Mammary epithelial cell (primary cell): ENCODE measurements at regions of chr16 and their contacts with region 1.

Region 1: GRCh38 chr16:49755313-49755620 is 100.6 kb downstream of the ZNF423 start:
- DNase-seq: no peak
- H3K4me3 ChIP-seq: no peak overlapping the region
- H3K27ac ChIP-seq: no peak overlapping the region
- H3K4me1 ChIP-seq: no peaks in the 10 kb centered on the region
- H3K27me3 ChIP-seq: peaks cover 3% of the 10 kb centered on the region
- CTCF ChIP-seq: no peak

Region 2: GRCh38 chr16:49649013-49649785 is 106.1 kb before region 1 on chr16:
- CTCF ChIA-PET with region 1: no interaction called
- dilution Hi-C with region 1: loop called (anchors 5 kb)
- in situ Hi-C with region 1: no loop called
- intact Hi-C with region 1: no loop called
- DNase-seq: no peak
- H3K4me3 ChIP-seq: no peak overlapping the region
- H3K27ac ChIP-seq: no peak overlapping the region
- H3K4me1 ChIP-seq: no peaks in the 10 kb centered on the region
- H3K27me3 ChIP-seq: no peaks in the 10 kb centered on the region
- CTCF ChIP-seq: no peak

Region 3: DNA sequence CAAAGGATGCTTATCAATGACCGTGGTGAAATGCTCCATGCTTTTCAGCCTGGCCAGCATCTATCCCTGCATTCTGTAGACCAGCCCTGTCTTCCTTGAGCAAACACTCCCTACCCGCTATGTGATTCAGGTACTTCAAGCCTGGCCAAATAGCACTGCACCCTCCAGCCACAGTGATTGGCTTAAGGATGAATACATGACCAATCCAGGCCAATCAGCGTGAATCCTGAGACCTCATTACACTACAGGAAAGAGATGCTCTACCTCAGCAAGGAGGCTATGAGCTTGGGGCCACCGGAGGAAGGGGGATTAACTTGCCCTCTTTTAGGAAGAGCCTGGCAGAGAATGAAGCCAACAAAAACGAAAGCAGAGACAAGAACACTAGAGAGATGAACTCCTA is 61.8 kb before region 1 on chr16:
- CTCF ChIA-PET with region 1: no interaction called
- dilution Hi-C with region 1: loop called (anchors 5 kb)
- in situ Hi-C with region 1: no loop called
- intact Hi-C with region 1: no loop called
- DNase-seq: no peak
- H3K4me3 ChIP-seq: no peak overlapping the region
- H3K27ac ChIP-seq: no peak overlapping the region
- H3K4me1 ChIP-seq: no peaks in the 10 kb centered on the region
- H3K27me3 ChIP-seq: no peaks in the 10 kb centered on the region
- CTCF ChIP-seq: no peak

Region 4: GRCh38 chr16:49844359-49844758 is 89.1 kb after region 1 on chr16:
- CTCF ChIA-PET with region 1: no interaction called
- dilution Hi-C with region 1: loop called (anchors 5 kb)
- in situ Hi-C with region 1: no loop called
- intact Hi-C with region 1: no loop called
- DNase-seq: no peak
- H3K4me3 ChIP-seq: no peak overlapping the region
- H3K27ac ChIP-seq: no peak overlapping the region
- H3K4me1 ChIP-seq: no peaks in the 10 kb centered on the region
- H3K27me3 ChIP-seq: no peaks in the 10 kb centered on the region
- CTCF ChIP-seq: no peak

Region 5: DNA sequence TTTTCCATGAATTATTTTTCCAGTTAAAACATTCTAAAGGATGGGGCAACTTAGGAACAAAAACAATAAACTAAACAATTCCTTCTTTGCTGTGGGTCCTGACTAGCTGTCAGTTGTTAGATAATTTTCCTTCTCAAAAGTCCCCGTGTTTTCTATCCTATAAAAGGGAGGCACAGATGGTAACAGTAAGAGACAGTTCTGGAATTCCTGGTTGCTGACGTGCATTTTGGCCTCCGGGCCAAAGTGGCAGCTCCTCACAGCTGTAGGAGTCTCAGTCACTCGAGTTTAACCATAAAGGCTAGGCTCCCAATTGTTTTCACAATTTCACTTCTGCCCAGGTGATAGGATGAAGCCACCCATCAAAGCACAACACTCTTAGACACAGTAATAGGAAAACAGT is 177.7 kb after region 1 on chr16:
- CTCF ChIA-PET with region 1: no interaction called
- dilution Hi-C with region 1: no loop called
- in situ Hi-C with region 1: no loop called
- intact Hi-C with region 1: no loop called
- DNase-seq: peak; percentile 8
- H3K4me3 ChIP-seq: no peak overlapping the region
- H3K27ac ChIP-seq: no peak overlapping the region
- H3K4me1 ChIP-seq: no peaks in the 10 kb centered on the region
- H3K27me3 ChIP-seq: no peaks in the 10 kb centered on the region
- CTCF ChIP-seq: no peak

Region 6: GRCh38 chr16:50802000-50802399 is 1046.7 kb after region 1 on chr16:
- CTCF ChIA-PET with region 1: no interaction called
- dilution Hi-C with region 1: no loop called
- in situ Hi-C with region 1: no loop called
- intact Hi-C with region 1: no loop called
- DNase-seq: no peak
- H3K4me3 ChIP-seq: no peak overlapping the region
- H3K27ac ChIP-seq: no peak overlapping the region
- H3K4me1 ChIP-seq: no peaks in the 10 kb centered on the region
- H3K27me3 ChIP-seq: no peaks in the 10 kb centered on the region
- CTCF ChIP-seq: no peak